HAP-1 (cell line): ENCODE measurements at regions of chr7 and their contacts with region 1.

Region 1: DNA sequence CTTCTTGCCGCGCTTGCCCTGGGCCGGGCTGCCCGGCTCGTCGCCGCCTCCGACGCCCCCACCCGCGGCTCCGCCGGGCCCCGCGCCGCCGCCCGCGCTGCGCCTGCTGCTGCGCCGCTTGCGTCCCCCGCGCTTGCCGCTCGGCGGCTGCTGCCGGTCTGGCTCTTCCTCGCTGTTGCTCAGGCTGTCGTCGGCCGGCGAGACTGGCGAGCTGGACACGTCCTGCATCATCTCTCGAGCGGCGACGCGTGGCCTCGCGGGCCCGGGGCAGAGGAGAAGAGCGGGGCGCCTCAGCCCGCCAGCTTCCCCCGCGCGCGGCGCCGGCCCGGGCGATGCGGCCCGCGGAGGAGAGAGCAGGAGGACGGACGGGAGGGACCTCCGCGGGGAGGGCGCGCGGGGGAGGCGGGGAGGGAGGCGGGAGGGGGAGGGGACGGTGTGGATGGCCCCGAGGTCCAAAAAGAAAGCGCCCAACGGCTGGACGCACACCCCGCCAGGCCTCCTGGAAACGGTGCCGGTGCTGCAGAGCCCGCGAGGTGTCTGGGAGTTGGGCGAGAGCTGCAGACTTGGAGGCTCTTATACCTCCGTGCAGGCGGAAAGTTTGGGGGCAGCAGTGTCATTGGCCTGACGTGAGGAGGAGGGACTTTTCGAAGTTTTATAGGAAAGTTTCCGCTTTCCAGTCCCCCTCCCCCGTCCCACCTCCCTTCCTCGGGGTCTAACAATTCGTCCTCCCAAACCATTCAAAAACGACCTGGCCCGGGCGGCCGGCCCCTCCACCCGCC is at the start of gene TWIST1:
- DNase-seq: peak; percentile 75 to 87
- H3K4me3 ChIP-seq: peak within 1 kb of the TSS; percentile 71
- H3K4me1 ChIP-seq: no peaks in the 10 kb centered on the region
- H3K27me3 ChIP-seq: peaks cover 10% of the 10 kb centered on the region

Region 2: GRCh38 chr7:19442016-19442785 is 324.9 kb after region 1 on chr7:
- in situ Hi-C with region 1: loop called (anchors 25 kb)
- DNase-seq: peak; percentile 54 to 61
- H3K4me3 ChIP-seq: no peak overlapping the region
- H3K4me1 ChIP-seq: no peaks in the 10 kb centered on the region
- H3K27me3 ChIP-seq: peaks cover 4% of the 10 kb centered on the region; the same call in 1 of the 2 replicates